ENCODE measurements at regions of chr14 and their contacts with region 1.

Region 1: GRCh38 chr14:102516531-102517415 is 7.2 kb upstream of the ANKRD9 start:
- DNase-seq: no peak
- H3K4me3 ChIP-seq: peak overlapping the region; percentile 64
- H3K27me3 ChIP-seq: no peaks in the 10 kb centered on the region
- CTCF ChIP-seq: peak; percentile 19; the same call in 1 of the 2 replicates

Region 2: DNA sequence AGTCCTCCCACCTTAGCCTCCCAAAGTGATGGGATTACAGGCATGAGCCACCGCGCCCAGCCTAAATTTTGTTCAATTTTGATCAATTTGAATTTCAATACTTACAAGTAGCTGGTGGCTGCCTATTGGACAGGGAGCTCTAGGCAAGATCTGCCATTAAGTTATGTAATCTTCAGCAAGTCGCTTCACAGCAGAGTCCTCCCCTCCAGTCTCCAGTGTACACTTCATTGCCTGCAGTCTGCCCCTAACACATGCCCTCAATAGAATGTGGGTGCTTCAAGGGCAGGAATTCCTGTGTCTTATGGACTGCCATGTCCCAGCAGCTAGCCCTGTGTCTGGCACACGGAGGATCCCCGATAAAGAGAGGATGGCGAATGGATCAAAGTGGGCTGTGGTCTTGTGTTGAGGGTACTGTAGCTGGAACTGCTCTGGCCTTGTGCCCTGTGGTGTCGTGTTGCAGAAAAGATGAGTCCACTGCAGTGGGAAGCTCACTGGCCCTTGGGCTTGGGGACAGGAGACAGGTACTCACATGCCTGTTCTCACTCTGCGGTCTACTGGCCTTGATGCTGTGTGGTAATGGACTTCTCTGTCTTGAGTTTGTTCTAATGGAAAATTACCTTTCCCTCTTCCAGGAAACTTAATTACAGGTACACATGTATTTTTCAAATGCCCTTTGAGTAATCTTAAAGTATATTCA is 86.4 kb before region 1 on chr14:
- CTCF ChIA-PET with region 1: interaction called, 10 read pairs
- POLR2A ChIA-PET with region 1: no interaction called
- DNase-seq: no peak
- H3K4me3 ChIP-seq: no peak overlapping the region
- H3K27me3 ChIP-seq: no peaks in the 10 kb centered on the region
- CTCF ChIP-seq: no peak